ENCODE measurements at regions of chrX and their contacts with region 1.

Region 1: GRCh38 chrX:87664381-87664780 is 146.8 kb downstream of the KLHL4 start:
- DNase-seq: no peak
- ATAC-seq: no peak

Region 2: GRCh38 chrX:87338510-87338909 is 325.9 kb before region 1 on chrX:
- intact Hi-C with region 1: loop called in 1 of 2 experiments (anchors 10 kb)
- DNase-seq: no peak
- ATAC-seq: no peak

Region 3: DNA sequence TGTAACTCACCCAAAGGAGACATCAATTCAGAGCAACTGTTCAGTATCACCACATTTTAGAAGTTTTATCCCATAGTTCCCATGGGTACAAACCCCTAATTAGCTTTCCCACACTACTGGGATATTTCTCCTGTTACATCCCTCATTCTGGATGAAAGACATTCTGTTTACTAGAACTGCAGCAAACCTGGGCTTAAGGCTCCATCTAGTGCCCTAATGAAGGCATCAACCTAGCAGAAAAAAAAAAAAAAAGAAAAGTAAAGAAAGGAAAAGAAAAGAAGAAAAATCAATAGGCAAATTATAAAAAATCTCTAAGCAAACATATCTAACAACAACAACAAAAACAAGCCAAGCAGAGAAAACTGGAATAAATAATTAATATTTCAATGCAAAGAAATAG is 949.0 kb after region 1 on chrX:
- intact Hi-C with region 1: no loop called
- DNase-seq: no peak
- ATAC-seq: no peak

Measured in left colon (tissue), 2 donors.